A673 (cell line): ENCODE measurements at regions of chr20 and their contacts with region 1.

Region 1: DNA sequence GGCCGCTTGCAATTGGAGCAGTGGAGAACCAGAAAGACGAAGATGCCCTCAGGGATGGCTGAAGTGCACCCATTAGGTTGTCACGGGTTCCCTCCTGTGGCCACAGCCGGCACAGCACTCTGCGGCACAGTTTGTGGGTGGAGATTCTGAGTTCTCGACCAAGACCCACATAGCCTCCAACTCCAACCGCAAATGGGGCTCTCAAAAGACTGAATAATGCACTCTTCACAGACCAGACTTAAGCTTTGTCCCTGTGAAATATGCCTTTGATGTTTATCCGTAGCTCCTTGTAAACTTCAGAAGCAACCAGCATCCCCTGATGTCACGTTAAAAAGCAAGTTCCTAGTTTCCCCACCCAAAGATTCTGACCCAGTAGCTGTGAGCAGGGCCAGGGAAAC is 934 bp upstream of the CST9 start:
- DNase-seq: peak; percentile 78
- H3K4me3 ChIP-seq: no peak overlapping the region
- H3K27ac ChIP-seq: no peak overlapping the region
- H3K4me1 ChIP-seq: no peaks in the 10 kb centered on the region
- H3K27me3 ChIP-seq: no peaks in the 10 kb centered on the region
- CTCF ChIP-seq: peak; percentile 85

Region 2: DNA sequence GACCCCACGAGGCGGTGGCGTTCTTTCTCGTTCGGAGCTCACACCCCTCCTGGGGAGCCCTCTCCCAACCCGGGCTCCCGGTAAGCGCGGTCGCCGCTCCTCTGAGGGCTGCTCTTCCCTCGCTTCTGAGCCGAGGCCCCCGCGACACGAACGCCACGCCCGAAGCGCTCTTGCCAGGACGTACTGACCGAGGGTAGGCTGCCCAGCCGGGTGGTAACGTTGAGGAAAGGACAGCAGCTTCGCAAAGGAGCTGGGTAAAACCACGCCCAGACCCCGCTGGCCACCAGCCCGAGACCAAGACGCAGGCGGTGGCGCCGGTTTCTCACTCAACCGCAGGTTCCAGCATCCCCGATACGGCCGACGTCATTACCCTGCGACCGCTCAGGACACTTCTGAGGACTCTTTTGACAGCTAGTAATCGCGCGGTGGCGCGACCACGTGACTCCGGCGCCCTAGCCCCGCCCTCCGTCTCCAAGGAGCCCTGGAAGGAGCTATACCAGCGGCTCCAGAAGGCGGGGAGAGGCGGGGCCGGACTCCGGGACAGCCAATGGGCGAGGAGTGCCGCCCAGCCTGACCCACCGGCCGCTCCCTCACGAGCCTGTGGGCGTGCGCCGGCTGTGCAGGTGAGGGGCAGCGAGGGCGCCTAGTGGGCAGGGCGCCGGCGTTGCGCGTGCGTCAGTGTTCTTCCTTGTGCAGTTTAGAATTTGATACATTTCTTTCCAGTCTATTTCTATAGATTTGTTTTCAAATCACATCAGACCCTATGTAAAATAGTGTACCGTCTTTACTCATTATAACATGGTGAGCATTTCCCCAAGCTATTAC is 248.7 kb before region 1 on chr20:
- CTCF ChIA-PET with region 1: no interaction called
- POLR2A ChIA-PET with region 1: no interaction called
- intact Hi-C with region 1: no loop called
- DNase-seq: peak; percentile 99
- H3K4me3 ChIP-seq: peak overlapping the region; percentile 58
- H3K27ac ChIP-seq: peak overlapping the region; percentile 78
- H3K4me1 ChIP-seq: peaks cover 5% of the 10 kb centered on the region
- H3K27me3 ChIP-seq: no peaks in the 10 kb centered on the region
- CTCF ChIP-seq: no peak

Region 3: DNA sequence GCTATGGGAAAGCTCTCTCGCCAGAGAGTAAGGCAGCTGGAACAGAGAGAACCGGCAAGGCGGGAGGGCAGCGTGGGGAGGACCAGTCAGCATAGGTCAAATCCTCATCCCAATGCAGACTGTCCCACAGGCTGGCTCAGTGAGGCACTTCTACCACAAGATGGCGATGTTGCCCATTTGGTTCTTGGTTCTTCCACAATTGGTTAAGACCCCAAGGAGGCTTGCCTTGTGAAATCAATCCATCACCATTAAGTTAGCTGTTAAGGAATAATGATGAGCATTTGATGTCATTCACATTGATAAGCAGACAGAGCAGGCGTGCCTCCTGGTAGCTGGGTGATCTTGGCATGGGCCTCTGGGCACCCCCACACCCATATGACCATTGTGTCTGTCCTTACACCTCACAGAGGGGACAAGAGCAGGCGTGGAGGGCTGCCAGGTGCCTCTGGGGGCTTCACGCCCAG is 164.8 kb before region 1 on chr20:
- CTCF ChIA-PET with region 1: interaction called, 3 read pairs
- POLR2A ChIA-PET with region 1: no interaction called
- intact Hi-C with region 1: loop called (anchors 1 kb)
- DNase-seq: peak; percentile 80
- H3K4me3 ChIP-seq: no peak overlapping the region
- H3K27ac ChIP-seq: no peak overlapping the region
- H3K4me1 ChIP-seq: no peaks in the 10 kb centered on the region
- H3K27me3 ChIP-seq: no peaks in the 10 kb centered on the region
- CTCF ChIP-seq: peak; percentile 92

Region 4: DNA sequence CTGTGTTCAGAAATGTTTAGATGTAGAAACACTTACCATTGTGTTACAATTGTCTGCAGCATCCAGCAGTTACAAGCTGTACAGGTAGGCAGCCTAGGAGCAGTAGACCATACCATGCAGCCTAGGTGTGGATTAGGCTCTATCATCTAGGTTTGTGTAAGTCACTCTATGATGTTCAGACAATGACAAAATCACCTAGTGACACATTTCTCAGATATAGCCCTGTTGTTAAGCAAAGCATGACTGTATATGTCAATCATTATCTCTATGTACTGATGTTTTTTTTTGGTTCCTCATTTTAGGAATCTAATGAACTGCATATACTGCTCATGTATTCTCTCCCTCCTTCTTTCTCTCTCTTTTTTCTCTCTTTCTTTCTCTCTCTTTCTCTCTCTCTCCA is 93.5 kb before region 1 on chr20:
- CTCF ChIA-PET with region 1: no interaction called
- POLR2A ChIA-PET with region 1: no interaction called
- intact Hi-C with region 1: no loop called
- DNase-seq: no peak
- H3K4me3 ChIP-seq: no peak overlapping the region
- H3K27ac ChIP-seq: no peak overlapping the region
- H3K4me1 ChIP-seq: no peaks in the 10 kb centered on the region
- H3K27me3 ChIP-seq: no peaks in the 10 kb centered on the region
- CTCF ChIP-seq: no peak